BJ (cell line): ENCODE measurements at regions of chr7 and their contacts with region 1.

Region 1: GRCh38 chr7:104267701-104268368 is 60.0 kb upstream of the ORC5 start:
- DNase-seq: no peak
- H3K4me3 ChIP-seq: no peak overlapping the region
- H3K27me3 ChIP-seq: no peaks in the 10 kb centered on the region
- CTCF ChIP-seq: peak; percentile 57

Region 2: GRCh38 chr7:104126411-104126841 is 141.4 kb before region 1 on chr7:
- CTCF ChIA-PET with region 1: no interaction called
- POLR2A ChIA-PET with region 1: no interaction called
- DNase-seq: no peak
- H3K4me3 ChIP-seq: no peak overlapping the region
- H3K27me3 ChIP-seq: no peaks in the 10 kb centered on the region
- CTCF ChIP-seq: no peak

Region 3: GRCh38 chr7:104231054-104232046 is 36.5 kb before region 1 on chr7:
- CTCF ChIA-PET with region 1: interaction called, 27 read pairs
- POLR2A ChIA-PET with region 1: no interaction called
- DNase-seq: no peak
- H3K4me3 ChIP-seq: no peak overlapping the region
- H3K27me3 ChIP-seq: peaks cover 2% of the 10 kb centered on the region
- CTCF ChIP-seq: peak; percentile 92

Region 4: DNA sequence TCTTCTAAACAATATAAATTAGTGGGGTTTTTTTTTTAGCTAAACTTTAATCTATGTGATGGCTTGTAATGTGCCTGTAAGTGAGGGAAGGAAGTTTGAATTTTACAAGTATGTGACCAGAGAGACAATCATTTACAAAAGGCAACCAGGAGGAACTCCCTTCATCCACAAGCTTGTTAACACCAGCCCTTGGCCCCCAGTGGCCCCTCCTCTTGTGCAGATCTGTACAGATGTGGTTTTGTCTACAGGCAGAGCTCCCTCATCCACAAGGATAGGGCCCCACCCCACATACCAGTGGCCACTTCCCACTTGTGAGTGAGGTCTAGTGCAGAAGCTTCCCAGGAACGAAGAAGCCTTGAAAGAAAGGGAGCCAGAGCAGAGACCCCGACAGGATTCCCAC is 512.1 kb after region 1 on chr7:
- CTCF ChIA-PET with region 1: no interaction called
- POLR2A ChIA-PET with region 1: no interaction called
- DNase-seq: no peak
- H3K4me3 ChIP-seq: no peak overlapping the region
- H3K27me3 ChIP-seq: no peaks in the 10 kb centered on the region
- CTCF ChIP-seq: no peak